Gastrocnemius medialis (tissue), 4 donors: ENCODE measurements at regions of chr22 and their contacts with region 1.

Region 1: DNA sequence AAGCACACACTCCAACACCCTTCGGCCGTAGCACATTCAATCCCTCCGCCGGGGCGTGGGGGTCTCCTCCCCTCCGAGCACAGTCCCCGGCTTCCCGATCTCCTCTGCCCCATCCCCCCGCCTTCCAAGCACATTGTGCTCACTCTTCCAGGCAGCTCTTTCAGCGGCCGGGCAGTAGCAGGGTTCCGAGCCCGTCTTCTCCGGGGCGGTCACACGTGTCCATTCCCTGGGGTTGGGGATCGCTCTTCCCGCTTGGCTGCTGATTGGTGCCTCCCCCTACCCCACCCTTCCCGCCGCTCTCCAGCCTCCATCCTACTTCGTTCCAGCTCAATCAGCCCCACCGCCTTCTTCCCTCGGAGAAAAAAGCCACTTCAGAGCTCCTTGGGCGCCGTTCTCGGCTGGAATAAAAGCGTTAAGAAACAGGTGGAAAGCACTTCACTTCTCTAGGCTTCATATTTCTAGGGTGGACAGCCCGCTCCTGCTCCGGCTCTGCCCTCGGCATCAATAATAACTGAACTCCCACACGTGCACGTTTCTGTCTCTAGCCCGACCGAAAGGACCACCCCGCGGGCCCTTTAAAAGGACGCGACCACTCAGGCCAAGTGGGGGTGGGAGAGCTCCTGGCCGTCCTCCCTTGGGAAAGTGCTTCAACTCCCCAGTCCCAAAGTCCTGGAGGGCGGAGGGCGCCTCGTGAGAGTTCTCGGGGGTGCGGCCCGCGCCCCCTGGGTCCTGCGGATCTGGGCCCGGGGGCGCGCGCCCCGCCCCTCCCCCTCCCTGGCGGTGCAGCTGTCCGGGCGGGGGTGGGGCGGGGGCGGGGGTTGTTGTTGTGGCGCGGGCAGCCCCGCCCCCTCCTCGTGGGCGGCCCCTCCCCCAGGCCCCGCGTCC is 464 bp upstream of the CECR2 start:
- DNase-seq: peak; percentile 74 to 78
- ATAC-seq: peak; percentile 69 to 72
- H3K4me3 ChIP-seq: peak overlapping the region; percentile 71 to 93 (median 80)
- H3K27ac ChIP-seq: peak overlapping the region; percentile 91 to 99 (median 96)
- H3K4me1 ChIP-seq: peaks cover 34 to 38% of the 10 kb centered on the region in 2 donors
- H3K27me3 ChIP-seq: no peaks in the 10 kb centered on the region
- CTCF ChIP-seq: no peak
- POLR2A ChIP-seq: peak; percentile 50 to 55

Region 2: DNA sequence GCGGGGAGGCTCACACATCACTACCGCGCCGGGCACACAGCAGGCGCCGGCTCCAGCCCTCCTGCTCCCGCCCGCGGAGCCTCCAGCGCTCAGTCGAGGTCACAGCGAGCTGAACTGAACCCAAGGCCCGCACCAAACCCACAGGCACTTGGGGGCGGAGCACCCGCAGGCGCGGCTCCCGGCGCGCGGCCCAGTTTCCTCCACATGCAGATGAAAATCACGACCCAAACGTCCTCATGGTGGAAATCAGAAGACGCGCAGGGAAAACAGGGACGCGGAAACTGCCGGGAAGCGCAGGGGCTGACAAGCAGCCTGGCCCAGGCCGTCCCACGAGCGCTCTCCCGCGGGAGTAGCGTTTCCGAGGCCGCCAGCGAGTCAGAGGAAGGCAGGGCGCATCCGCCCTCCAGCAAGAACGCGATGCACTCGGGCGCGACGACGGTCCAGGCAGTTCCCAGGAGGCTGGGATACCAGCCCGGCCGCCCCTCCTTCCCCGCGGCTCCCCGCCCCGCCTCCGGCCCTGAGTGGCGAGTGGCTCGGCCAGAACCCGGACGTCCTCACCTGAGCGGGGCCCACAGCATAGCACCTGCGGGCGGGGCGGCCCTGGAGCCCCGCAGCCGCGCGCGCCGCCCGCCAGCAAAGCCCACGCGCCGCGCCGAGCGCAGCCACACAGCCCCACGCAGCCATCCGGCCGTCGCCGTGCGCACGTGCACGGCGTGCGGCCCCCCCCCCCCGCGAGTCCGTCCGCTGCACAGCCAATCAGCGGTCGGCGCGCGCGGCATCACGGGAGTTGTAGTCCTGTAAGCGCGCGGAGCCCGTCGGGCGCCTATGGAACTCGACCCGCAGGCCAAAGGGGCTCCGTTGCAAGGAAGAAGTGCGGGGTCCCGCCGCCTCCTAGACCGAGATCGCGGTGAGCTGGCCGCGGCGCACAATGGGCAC is 210.0 kb before region 1 on chr22 and contains the start of gene HDHD5:
- in situ Hi-C with region 1: no loop called
- intact Hi-C with region 1: loop called (anchors 5 kb)
- DNase-seq: peak; percentile 86 to 88
- ATAC-seq: peak; percentile 89
- H3K4me3 ChIP-seq: peak within 1 kb of the TSS; percentile 70 to 90 (median 80)
- H3K27ac ChIP-seq: peak within 1 kb of the TSS; percentile 91 to 94 (median 91)
- H3K4me1 ChIP-seq: peaks cover 31 to 39% of the 10 kb centered on the region in 2 donors
- H3K27me3 ChIP-seq: no peaks in the 10 kb centered on the region
- CTCF ChIP-seq: peak in 1 of 5 experiments; percentile 11
- POLR2A ChIP-seq: peak; percentile 82 to 83
- total RNA-seq, gene HDHD5: 32.0 to 38.5 (median 35.1) TPM

Region 3: DNA sequence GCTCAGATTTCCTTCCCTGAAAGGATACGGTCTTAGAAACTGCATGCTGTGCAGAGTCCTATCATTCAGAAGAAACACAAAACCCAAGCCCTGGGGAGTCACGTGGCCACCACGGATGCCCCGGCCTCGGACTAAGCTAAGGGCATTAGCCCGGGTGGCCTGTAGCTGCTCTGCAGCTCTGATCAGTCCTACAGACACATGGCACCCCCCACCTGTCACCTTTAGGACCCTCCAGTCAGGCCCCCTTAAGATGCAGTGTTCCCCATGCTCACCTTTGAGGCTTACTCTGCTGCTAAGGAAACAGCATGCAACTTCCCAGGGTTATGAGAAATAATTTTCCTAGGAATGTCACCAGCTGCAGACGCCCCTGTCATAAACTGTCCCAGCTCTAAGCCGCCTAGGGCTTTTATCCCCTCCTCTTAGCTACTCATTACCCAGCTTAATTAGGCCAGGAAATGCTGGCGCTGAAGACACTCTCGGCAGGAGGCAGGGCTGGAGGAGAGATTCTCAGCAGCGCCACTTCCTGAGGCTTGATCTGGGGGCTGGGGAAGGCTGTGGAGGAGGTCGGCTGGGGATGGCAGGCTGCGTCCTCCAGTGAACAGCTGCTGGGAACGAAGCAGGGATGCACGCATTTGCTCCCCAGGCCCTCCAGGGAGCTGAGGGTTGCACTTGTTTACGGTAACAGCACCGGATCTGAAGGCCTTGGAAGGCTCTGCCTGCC is 102.4 kb before region 1 on chr22:
- in situ Hi-C with region 1: no loop called
- intact Hi-C with region 1: loop called (anchors 2 kb)
- DNase-seq: peak; percentile 13 to 71
- ATAC-seq: peak; percentile 14 to 26
- H3K4me3 ChIP-seq: no peak overlapping the region
- H3K27ac ChIP-seq: peak overlapping the region; percentile 93 to 98 (median 95)
- H3K4me1 ChIP-seq: peaks cover 32 to 43% of the 10 kb centered on the region in 2 donors
- H3K27me3 ChIP-seq: no peaks in the 10 kb centered on the region
- CTCF ChIP-seq: no peak
- POLR2A ChIP-seq: no peak

Region 4: DNA sequence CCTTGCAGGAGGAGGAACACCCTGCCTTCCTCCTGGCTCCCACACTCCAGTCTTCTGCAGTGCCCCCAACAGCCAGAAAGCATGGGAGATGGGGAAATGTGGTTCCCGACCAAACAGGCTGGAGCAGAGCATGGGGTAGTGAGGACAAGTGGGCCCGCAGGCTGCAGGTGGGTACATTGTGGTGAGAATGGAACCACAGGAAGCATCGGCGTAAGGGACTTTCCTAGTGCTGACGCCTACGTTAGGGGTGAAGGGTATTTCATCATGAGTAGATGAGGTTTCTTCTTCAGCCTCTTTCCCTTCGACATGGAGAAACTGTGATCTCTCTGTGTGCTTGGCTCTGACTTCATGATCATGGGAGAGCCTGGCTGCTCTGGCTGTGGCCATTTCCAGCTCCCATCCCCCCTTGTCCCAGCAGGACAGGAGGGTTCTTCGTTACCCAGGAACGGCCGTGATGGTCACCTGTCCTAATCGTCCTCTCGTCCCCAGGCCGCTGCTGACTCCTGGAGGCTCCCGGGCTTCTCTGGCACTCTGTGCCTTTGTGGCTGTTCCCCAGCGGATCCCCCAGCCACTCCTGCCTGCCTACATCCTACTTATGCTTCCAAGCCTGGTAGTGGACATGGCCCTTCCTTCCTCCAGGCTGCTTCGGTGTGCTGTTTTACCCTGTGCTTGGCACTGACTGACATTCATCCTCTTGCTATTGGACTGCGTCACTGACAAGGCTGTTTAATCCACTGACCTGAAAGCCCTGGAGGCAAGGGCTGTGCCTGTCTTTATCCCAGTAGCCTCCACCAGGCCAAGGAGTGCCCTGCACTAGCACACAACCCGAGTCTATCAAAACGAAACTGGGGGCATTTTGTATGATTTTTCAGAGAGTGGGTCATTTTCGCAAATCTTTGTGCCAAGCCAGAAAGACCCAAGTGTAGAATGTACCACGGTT is 64.7 kb before region 1 on chr22:
- in situ Hi-C with region 1: no loop called
- intact Hi-C with region 1: no loop called
- DNase-seq: peak; percentile 48 to 64
- ATAC-seq: peak; percentile 74 to 90
- H3K4me3 ChIP-seq: peak overlapping the region in 2 of 4 donors; percentile 13 to 25
- H3K27ac ChIP-seq: peak overlapping the region; percentile 23 to 82 (median 58)
- H3K4me1 ChIP-seq: peaks cover 14 to 22% of the 10 kb centered on the region in 2 donors
- H3K27me3 ChIP-seq: no peaks in the 10 kb centered on the region
- CTCF ChIP-seq: peak in 1 of 5 experiments; percentile 14
- POLR2A ChIP-seq: no peak

Region 5: GRCh38 chr22:17477391-17477833 is 108.6 kb after region 1 on chr22:
- in situ Hi-C with region 1: loop called in 1 of 4 experiments (anchors 10 kb)
- intact Hi-C with region 1: loop called (anchors 2 kb)
- DNase-seq: peak; percentile 58 to 83
- ATAC-seq: peak; percentile 83 to 87
- H3K4me3 ChIP-seq: peak overlapping the region; percentile 22 to 46 (median 42)
- H3K27ac ChIP-seq: peak overlapping the region; percentile 88 to 90 (median 89)
- H3K4me1 ChIP-seq: peaks cover 59 to 61% of the 10 kb centered on the region in 2 donors
- H3K27me3 ChIP-seq: no peaks in the 10 kb centered on the region
- CTCF ChIP-seq: no peak
- POLR2A ChIP-seq: peak; percentile 35 to 50

Region 6: DNA sequence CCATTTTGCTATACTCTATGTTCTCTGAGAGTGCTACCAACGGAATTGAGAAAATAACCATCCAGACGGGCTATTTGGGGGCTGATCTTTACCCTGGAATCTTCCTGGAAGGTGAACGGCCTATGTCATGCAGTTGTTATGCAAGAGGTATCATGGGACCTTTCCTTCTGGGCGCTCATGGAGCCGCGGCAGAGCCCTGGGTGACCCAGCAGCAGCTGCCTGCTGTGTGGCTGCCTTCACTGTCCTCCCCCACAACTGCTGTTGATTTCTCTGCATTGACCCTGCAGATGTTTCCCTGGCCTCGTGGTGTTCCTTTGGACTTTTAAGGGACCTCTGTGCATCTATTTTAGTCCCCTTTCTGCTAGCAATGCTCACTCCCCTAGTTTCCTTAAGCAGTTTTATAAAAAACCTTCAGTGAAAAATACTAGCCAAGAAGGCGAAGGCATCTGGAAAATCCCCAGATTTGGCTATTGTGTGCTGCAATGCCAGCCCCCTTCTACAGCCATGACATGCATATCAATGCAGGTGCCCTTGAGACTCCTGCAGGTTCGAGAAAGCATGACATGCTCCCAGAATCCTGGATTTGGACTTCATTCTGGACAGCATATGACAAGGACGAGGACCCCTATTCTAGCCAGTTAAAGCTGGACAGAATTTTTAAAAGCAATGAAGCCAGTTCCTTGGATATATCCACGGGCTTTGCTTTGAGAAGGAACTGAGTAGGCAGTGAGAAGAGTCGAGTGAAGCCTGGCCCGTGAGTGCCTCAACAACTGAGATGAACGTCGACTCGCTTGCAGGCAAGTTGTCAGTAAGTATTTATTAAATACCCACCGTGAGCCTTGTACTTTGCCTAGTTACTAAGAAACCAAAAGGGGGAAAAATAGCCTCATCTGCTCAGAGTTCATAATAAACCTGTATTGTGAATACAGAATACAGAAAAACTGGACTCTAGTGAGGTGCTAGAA is 194.4 kb after region 1 on chr22 and contains the start of gene SLC25A18:
- in situ Hi-C with region 1: no loop called
- intact Hi-C with region 1: loop called (anchors 5 kb)
- DNase-seq: peak; percentile 88 to 91
- ATAC-seq: peak; percentile 82 to 89
- H3K4me3 ChIP-seq: peak within 1 kb of the TSS; percentile 43 to 55 (median 52)
- H3K27ac ChIP-seq: peak within 1 kb of the TSS; percentile 87 to 98 (median 96)
- H3K4me1 ChIP-seq: peaks cover 30 to 47% of the 10 kb centered on the region in 2 donors
- H3K27me3 ChIP-seq: no peaks in the 10 kb centered on the region
- CTCF ChIP-seq: peak in 3 of 5 experiments; percentile 12 to 40 (median 26)
- POLR2A ChIP-seq: peak; percentile 62 to 65
- total RNA-seq, gene SLC25A18: 9.3 to 22.2 (median 13.3) TPM